Endothelial cell of umbilical vein (primary cell): ENCODE measurements at regions of chr3 and their contacts with region 1.

Region 1: DNA sequence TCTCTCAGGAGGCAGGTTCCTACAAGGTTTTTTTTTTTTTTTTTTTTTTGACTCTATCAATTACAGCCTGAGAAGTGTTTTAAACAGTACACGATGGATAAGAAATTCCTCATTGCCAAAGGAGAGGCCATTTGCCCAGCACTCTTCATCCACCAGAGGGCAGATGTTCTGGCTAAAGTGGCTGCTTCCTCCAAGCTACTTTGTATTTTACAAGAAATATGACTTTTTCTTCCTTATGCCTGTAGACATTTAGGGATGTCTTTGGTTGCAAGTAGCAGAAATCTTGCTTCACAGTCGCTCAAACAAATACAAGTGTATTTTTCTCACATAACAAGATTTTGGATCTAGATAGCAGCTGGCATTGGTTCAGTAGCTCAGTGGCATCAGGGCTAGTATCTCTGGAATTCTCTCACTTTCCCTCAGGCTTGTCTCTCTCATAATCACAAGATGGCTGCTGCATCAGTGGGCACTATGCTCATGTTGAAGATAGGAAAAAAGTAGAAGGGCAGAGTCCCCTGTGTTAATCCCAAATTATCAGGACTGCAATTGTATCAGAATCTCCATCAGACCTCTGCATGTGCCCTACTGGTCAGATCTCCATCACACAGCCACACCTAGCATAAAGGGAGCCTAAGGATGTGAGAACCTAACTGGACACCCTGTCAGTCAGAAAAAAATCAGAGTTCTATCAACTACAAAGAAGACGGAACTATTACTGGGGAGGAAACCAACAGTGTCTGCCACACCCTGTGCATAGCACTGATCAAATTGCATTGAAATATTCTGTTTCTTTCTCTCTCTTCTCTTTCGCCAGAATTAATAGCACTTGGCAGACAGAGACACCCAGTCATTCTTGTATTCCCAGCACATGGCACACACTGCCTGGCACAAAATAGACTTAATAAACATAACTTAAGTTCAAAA is 138.9 kb upstream of the COL8A1 start:
- DNase-seq: peak; percentile 80
- H3K4me3 ChIP-seq: no peak overlapping the region
- H3K27ac ChIP-seq: no peak overlapping the region
- H3K4me1 ChIP-seq: peaks cover 27% of the 10 kb centered on the region
- H3K27me3 ChIP-seq: no peaks in the 10 kb centered on the region
- CTCF ChIP-seq: peak; percentile 71 to 76
- POLR2A ChIP-seq: no peak

Region 2: GRCh38 chr3:99114565-99115291 is 384.8 kb before region 1 on chr3:
- CTCF ChIA-PET with region 1: interaction called, 18 read pairs
- POLR2A ChIA-PET with region 1: no interaction called
- dilution Hi-C with region 1: no loop called
- intact Hi-C with region 1: loop called (anchors 1 kb)
- DNase-seq: peak; percentile 70
- H3K4me3 ChIP-seq: no peak overlapping the region
- H3K27ac ChIP-seq: no peak overlapping the region
- H3K4me1 ChIP-seq: peaks cover under 1% of the 10 kb centered on the region
- H3K27me3 ChIP-seq: no peaks in the 10 kb centered on the region
- CTCF ChIP-seq: peak; percentile 90 to 91
- POLR2A ChIP-seq: no peak

Region 3: DNA sequence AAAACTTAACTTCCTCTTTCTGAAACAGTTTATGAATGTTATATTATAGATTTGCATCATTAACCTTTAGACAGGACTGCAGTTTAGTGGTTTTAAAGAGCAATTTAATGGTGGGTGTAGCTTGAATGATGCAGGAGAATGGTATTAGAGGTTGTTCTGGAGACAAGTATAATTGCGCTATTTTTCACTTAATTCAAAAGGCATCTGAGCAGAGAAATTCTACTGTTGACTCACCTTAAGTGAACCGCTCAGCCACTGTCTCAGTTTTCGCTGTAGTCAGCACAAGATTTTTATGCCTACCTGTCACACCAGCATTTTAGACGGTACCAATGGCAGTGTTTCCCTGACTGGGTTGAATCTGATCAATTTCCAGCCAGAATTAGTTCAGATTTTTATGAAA is 249.2 kb before region 1 on chr3:
- CTCF ChIA-PET with region 1: no interaction called
- POLR2A ChIA-PET with region 1: no interaction called
- dilution Hi-C with region 1: no loop called
- intact Hi-C with region 1: no loop called
- DNase-seq: no peak
- H3K4me3 ChIP-seq: no peak overlapping the region
- H3K27ac ChIP-seq: no peak overlapping the region
- H3K4me1 ChIP-seq: peaks cover 23% of the 10 kb centered on the region
- H3K27me3 ChIP-seq: no peaks in the 10 kb centered on the region
- CTCF ChIP-seq: no peak
- POLR2A ChIP-seq: no peak

Region 4: DNA sequence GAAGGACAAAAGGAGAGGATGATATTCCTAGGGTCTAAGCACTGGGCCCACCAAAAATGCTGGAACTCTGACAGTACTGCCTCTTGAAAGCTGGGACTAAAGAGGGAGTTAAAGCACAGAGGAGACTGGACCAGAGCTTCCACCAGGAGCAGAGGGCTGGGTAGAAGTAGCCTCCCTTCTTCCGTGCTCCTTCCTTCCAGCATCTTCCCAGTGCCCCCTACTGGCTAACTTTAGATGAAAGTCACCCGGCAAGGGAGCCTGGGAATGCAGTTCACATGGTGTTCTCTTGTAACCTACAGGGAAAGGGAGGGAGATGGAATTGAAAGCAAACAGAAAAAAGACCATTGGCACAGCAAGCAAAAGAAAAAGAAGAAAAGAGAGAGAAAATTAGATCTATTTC is 32.7 kb after region 1 on chr3:
- CTCF ChIA-PET with region 1: interaction called, 61 read pairs
- POLR2A ChIA-PET with region 1: no interaction called
- dilution Hi-C with region 1: no loop called
- intact Hi-C with region 1: loop called (anchors 1 kb)
- DNase-seq: peak; percentile 88
- H3K4me3 ChIP-seq: no peak overlapping the region
- H3K27ac ChIP-seq: peak overlapping the region; percentile 5
- H3K4me1 ChIP-seq: no peaks in the 10 kb centered on the region
- H3K27me3 ChIP-seq: no peaks in the 10 kb centered on the region
- CTCF ChIP-seq: peak; percentile 75 to 81
- POLR2A ChIP-seq: no peak

Region 5: DNA sequence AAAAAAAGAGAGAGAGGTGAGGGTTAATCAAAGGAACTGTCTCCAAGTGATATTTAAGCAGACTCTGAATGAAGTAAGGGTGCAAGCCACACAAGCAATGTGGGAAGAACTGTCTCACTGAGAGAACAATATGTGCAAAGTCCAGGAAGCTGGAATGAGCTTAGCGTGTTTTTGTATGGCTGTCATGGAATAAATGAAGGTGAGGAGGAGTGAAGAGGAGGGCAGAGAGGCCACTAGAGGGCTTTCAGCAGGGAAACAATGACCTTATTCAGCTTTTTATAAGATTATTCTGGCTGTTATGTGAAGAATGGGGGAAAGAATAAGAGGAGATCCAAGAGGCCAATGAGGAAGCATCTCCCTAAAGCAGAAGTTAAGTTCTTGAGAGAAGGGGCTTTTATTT is 52.0 kb after region 1 on chr3:
- CTCF ChIA-PET with region 1: interaction called, 13 read pairs
- POLR2A ChIA-PET with region 1: no interaction called
- dilution Hi-C with region 1: no loop called
- intact Hi-C with region 1: no loop called
- DNase-seq: no peak
- H3K4me3 ChIP-seq: no peak overlapping the region
- H3K27ac ChIP-seq: no peak overlapping the region
- H3K4me1 ChIP-seq: peaks cover 39% of the 10 kb centered on the region
- H3K27me3 ChIP-seq: no peaks in the 10 kb centered on the region
- CTCF ChIP-seq: peak in 1 of 2 donors; percentile 4
- POLR2A ChIP-seq: no peak

Region 6: DNA sequence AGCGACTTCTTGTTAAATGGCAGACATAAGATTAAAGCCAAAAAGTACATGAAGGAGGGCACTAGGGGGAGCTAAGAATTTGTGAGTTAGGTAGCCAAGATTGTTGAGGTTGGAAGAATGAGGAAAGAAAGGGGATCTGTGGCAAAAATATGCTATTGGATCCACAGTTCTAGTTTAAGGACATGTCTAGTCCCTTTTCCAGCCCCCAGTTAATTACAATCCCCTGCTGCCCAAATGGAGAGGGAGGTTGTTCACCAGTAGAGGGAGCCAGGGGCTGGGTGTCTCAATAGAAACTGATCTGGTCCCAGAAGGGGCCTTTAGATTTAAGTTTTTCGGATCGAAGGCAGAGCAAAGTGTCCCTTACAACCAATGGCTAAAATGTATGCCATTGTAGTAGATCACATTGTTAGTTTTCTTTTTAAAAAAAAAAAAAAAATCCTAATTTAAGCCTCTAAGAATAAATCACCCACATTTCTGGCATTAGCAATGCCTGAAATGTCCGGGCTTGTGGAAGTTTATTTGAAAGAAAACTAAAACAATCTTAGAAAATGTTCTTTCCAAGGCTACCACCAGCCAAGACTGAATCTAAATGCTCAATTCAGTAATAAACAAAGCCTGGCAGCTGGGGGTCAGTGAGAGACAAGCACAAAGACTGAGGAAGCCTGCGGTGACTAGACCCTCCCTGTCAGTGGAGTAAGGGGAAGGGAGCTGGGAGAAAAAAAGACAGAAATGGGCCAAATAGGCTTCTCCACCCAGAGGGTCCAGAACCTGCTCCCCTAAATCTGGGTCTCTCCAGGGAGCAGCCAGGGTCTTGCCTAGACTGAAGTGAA is 146.0 kb after region 1 on chr3:
- CTCF ChIA-PET with region 1: interaction called, 24 read pairs
- POLR2A ChIA-PET with region 1: no interaction called
- dilution Hi-C with region 1: no loop called
- intact Hi-C with region 1: no loop called
- DNase-seq: peak; percentile 76
- H3K4me3 ChIP-seq: no peak overlapping the region
- H3K27ac ChIP-seq: peak overlapping the region; percentile 75
- H3K4me1 ChIP-seq: peaks cover 97% of the 10 kb centered on the region
- H3K27me3 ChIP-seq: no peaks in the 10 kb centered on the region
- CTCF ChIP-seq: peak; percentile 47 to 68
- POLR2A ChIP-seq: peak; percentile 34

Region 7: DNA sequence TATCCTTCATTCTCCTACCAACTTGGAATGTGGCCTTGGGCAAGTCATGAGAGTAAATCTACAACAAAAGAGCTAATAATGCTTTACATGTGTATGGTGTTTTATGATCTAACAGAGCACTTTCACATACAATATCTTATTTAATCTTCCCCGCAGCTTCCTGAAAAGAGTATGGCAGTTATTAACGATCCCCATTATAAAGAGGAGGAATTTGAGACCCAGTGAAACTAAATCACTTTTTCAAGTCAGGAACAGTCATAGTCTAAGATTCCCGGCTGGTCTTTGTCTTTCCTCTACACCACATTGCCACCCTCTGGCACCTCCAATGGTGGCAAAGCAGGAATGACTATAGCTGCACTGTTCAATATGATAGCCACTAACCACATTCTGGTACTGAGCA is 248.4 kb after region 1 on chr3:
- CTCF ChIA-PET with region 1: interaction called, 61 read pairs
- POLR2A ChIA-PET with region 1: no interaction called
- dilution Hi-C with region 1: no loop called
- intact Hi-C with region 1: loop called (anchors 1 kb)
- DNase-seq: peak; percentile 62
- H3K4me3 ChIP-seq: no peak overlapping the region
- H3K27ac ChIP-seq: peak overlapping the region; percentile 12
- H3K4me1 ChIP-seq: peaks cover 24% of the 10 kb centered on the region
- H3K27me3 ChIP-seq: no peaks in the 10 kb centered on the region
- CTCF ChIP-seq: peak; percentile 23 to 27
- POLR2A ChIP-seq: no peak

Region 8: DNA sequence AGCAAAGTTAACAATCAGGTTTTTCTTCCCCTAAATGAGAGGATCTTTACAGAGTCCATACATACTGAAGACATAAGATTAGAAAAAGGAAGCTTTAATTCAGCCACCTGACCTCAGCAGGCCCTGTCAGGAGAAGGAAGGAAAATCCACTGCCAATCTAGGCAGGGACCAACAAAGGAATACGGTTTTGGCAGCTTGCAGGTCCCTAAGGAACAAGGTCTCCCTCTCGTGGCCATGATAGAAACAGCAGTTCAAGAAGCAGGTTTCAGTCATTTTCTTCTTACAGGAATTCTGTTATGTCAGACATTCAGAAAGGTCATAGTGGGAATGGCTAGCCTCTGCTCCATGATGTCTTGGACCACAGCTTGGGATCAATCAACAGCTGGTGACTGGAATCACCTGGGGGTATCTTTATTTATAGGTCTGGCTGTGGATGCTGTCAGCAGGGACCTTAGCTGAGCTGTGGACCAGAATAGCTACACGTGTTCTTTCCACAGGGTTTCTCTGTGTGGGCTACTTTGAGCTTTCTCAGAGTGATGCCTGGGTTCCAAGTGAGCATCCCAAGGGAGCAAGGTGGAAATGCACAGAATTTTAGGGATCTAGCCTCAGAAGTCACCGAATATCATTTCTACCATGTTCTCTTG is 308.8 kb after region 1 on chr3:
- CTCF ChIA-PET with region 1: interaction called, 7 read pairs
- POLR2A ChIA-PET with region 1: no interaction called
- dilution Hi-C with region 1: no loop called
- intact Hi-C with region 1: loop called (anchors 5 kb)
- DNase-seq: peak; percentile 86
- H3K4me3 ChIP-seq: no peak overlapping the region
- H3K27ac ChIP-seq: no peak overlapping the region
- H3K4me1 ChIP-seq: no peaks in the 10 kb centered on the region
- H3K27me3 ChIP-seq: no peaks in the 10 kb centered on the region
- CTCF ChIP-seq: peak; percentile 84 to 87
- POLR2A ChIP-seq: no peak